ENCODE measurements at regions of chr11 and their contacts with region 1.

Region 1: DNA sequence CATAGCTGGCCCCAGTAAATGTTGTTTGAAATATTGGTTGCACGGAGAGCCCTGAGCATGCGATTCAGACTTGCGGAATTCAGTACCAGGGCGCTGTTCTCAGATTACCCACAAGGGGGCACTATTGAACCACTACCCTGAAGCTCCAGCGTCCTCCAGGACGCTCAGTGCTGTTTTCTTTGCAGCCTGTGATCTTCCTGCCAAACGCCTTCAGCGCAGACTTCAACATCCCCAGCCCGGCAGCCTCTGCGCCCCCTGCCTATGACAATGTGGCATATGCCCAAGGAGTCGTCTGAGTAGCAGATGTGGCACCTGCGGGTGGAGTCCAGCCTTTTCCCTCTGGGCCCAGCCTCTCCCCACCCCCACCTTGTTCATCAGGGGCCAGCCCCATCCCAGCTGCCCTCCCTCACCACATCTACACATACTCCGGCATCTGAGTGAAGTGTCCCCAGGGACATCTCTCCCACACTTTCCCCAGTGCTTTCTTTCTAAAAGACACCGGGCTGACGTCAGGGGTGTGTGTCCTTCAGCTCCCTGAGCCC is 9.6 kb upstream of the MS4A10 start:
- DNase-seq: peak; percentile 63 to 83 (median 68)
- H3K4me3 ChIP-seq: no peak overlapping the region
- H3K4me3 Mint-ChIP-seq: peak overlapping the region in 2 of 7 donors; percentile 40 to 47
- H3K27ac ChIP-seq: no peak overlapping the region
- H3K27ac Mint-ChIP-seq: peak overlapping the region in 3 of 8 donors; percentile 14 to 40 (median 21)
- H3K4me1 ChIP-seq: no peaks in the 10 kb centered on the region
- H3K4me1 Mint-ChIP-seq: peaks cover 10 to 13% (median 11%) of the 10 kb centered on the region in 3 donors
- H3K27me3 ChIP-seq: no peaks in the 10 kb centered on the region
- H3K27me3 Mint-ChIP-seq: peaks cover 8 to 12% of the 10 kb centered on the region in 2 donors

Region 2: GRCh38 chr11:60764879-60765278 is 10.6 kb before region 1 on chr11:
- CTCF ChIA-PET with region 1: interaction called, 15 read pairs
- POLR2A ChIA-PET with region 1: no interaction called
- DNase-seq: no peak
- H3K4me3 ChIP-seq: no peak overlapping the region
- H3K4me3 Mint-ChIP-seq: no peak overlapping the region
- H3K27ac ChIP-seq: no peak overlapping the region
- H3K27ac Mint-ChIP-seq: no peak overlapping the region
- H3K4me1 ChIP-seq: no peaks in the 10 kb centered on the region
- H3K4me1 Mint-ChIP-seq: no peaks in the 10 kb centered on the region
- H3K27me3 ChIP-seq: peaks cover 6% of the 10 kb centered on the region
- H3K27me3 Mint-ChIP-seq: peaks cover 24 to 76% of the 10 kb centered on the region in 2 donors

Region 3: GRCh38 chr11:60786811-60787567 is 11.5 kb after region 1 on chr11:
- CTCF ChIA-PET with region 1: interaction called, 18 read pairs
- POLR2A ChIA-PET with region 1: no interaction called
- DNase-seq: no peak
- H3K4me3 ChIP-seq: no peak overlapping the region
- H3K4me3 Mint-ChIP-seq: no peak overlapping the region
- H3K27ac ChIP-seq: no peak overlapping the region
- H3K27ac Mint-ChIP-seq: peak overlapping the region in 1 of 8 donors; percentile 0
- H3K4me1 ChIP-seq: no peaks in the 10 kb centered on the region
- H3K4me1 Mint-ChIP-seq: no peaks in the 10 kb centered on the region
- H3K27me3 ChIP-seq: no peaks in the 10 kb centered on the region
- H3K27me3 Mint-ChIP-seq: peaks cover 0 to 8% of the 10 kb centered on the region in 2 donors